Activated naive CD4-positive, alpha-beta T cell treated with anti-CD3 and anti-CD28 coated beads for 36 hours (primary cell): ENCODE measurements at regions of chr9 and their contacts with region 1.

Region 1: DNA sequence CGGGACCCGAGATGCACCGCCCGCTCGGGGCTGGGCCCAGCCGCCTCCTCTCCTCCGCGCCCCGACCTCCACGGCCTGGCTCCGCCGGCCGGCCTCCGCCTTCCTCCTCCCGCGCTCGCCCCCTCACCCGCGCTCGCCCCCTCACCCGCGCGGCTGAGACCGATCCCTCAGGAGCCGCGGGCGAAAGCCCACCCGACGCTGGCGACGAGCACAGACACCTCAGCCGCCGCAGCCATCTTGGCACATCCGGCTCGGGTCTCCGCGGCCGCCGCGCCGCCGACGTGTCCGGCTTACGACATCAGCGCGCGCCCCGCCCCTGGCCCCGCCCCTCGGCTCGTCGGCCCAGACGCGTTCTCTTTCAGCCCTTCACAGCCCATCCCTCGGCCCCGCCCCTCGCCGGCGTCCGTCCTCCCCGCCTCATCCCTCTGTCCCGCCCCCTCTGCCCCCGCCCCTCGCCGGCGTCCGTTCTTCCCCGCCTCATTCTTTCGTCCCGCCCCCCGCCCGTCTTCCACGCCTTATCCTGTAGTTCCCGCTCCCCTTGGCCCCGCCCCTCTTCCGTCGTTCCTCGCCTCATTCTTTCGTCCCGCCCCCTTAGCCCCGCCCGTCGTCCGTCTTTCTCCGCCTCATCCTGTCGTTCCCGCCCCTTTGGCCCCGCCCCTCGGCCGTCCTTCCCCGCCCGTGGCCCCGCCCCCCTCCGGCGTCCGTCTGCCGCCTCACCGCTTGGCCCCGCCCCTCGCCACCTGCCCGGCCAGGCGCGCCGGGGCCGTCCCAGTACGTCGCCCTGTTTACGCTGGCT is at the start of gene SEC16A:
- DNase-seq: peak; percentile 100
- H3K4me3 Mint-ChIP-seq: peak within 1 kb of the TSS; percentile 99
- H3K27ac Mint-ChIP-seq: peak within 1 kb of the TSS; percentile 99
- H3K4me1 Mint-ChIP-seq: peaks cover 35% of the 10 kb centered on the region
- H3K27me3 Mint-ChIP-seq: no peaks in the 10 kb centered on the region
- total RNA-seq, gene SEC16A: 44.1 to 47.3 TPM

Region 2: GRCh38 chr9:136118320-136119060 is 364.5 kb before region 1 on chr9 and contains the start of gene TMEM250:
- CTCF ChIA-PET with region 1: no interaction called
- intact Hi-C with region 1: loop called (anchors 1 kb)
- DNase-seq: peak; percentile 96
- H3K4me3 Mint-ChIP-seq: peak within 1 kb of the TSS; percentile 78
- H3K27ac Mint-ChIP-seq: peak within 1 kb of the TSS; percentile 80
- H3K4me1 Mint-ChIP-seq: peaks cover 37% of the 10 kb centered on the region
- H3K27me3 Mint-ChIP-seq: no peaks in the 10 kb centered on the region
- total RNA-seq, gene TMEM250: 20.7 to 22.2 TPM

Region 3: GRCh38 chr9:136400038-136400834 is 82.8 kb before region 1 on chr9 and contains the start of gene SNAPC4:
- CTCF ChIA-PET with region 1: no interaction called
- intact Hi-C with region 1: loop called (anchors 1 kb)
- DNase-seq: peak; percentile 85
- H3K4me3 Mint-ChIP-seq: peak within 1 kb of the TSS; percentile 78
- H3K27ac Mint-ChIP-seq: peak within 1 kb of the TSS; percentile 59
- H3K4me1 Mint-ChIP-seq: peaks cover 57% of the 10 kb centered on the region
- H3K27me3 Mint-ChIP-seq: no peaks in the 10 kb centered on the region
- total RNA-seq, gene SNAPC4: 12.3 to 14.1 TPM

Region 4: GRCh38 chr9:136631038-136632000 is 148.3 kb after region 1 on chr9:
- CTCF ChIA-PET with region 1: interaction called, 88 read pairs
- intact Hi-C with region 1: loop called (anchors 1 kb)
- DNase-seq: peak; percentile 82
- H3K4me3 Mint-ChIP-seq: no peak overlapping the region
- H3K27ac Mint-ChIP-seq: no peak overlapping the region
- H3K4me1 Mint-ChIP-seq: no peaks in the 10 kb centered on the region
- H3K27me3 Mint-ChIP-seq: peaks cover 5% of the 10 kb centered on the region

Region 5: GRCh38 chr9:136790927-136791641 is 308.1 kb after region 1 on chr9 and contains the start of gene TMEM141:
- CTCF ChIA-PET with region 1: no interaction called
- intact Hi-C with region 1: loop called (anchors 1 kb)
- DNase-seq: peak; percentile 100
- H3K4me3 Mint-ChIP-seq: peak within 1 kb of the TSS; percentile 83
- H3K27ac Mint-ChIP-seq: peak within 1 kb of the TSS; percentile 79
- H3K4me1 Mint-ChIP-seq: peaks cover 19% of the 10 kb centered on the region
- H3K27me3 Mint-ChIP-seq: no peaks in the 10 kb centered on the region
- total RNA-seq, gene TMEM141: 38.1 to 39.6 TPM